Activated CD4-positive, alpha-beta memory T cell treated with anti-CD3 and anti-CD28 coated beads, Interleukin-2, amount 10 ng/mL, durations not matched to agents 7 days and 5 days (primary cell): ENCODE measurements at regions of chr5 and their contacts with region 1.

Region 1: GRCh38 chr5:163489055-163489744 is 16.2 kb upstream of the MAT2B start:
- DNase-seq: no peak
- H3K4me3 Mint-ChIP-seq: no peak overlapping the region
- H3K27ac Mint-ChIP-seq: no peak overlapping the region
- H3K4me1 Mint-ChIP-seq: no peaks in the 10 kb centered on the region
- H3K27me3 Mint-ChIP-seq: no peaks in the 10 kb centered on the region

Region 2: GRCh38 chr5:163505368-163506094 is 16.3 kb after region 1 on chr5 and contains the start of gene MAT2B:
- CTCF ChIA-PET with region 1: interaction called, 6 read pairs
- POLR2A ChIA-PET with region 1: interaction called, 10 read pairs
- DNase-seq: peak; percentile 96
- H3K4me3 Mint-ChIP-seq: peak within 1 kb of the TSS; percentile 96
- H3K27ac Mint-ChIP-seq: peak within 1 kb of the TSS; percentile 99
- H3K4me1 Mint-ChIP-seq: peaks cover 36% of the 10 kb centered on the region
- H3K27me3 Mint-ChIP-seq: no peaks in the 10 kb centered on the region
- total RNA-seq, gene MAT2B: 112 to 119 TPM

Region 3: GRCh38 chr5:163585206-163585605 is 96.0 kb after region 1 on chr5:
- CTCF ChIA-PET with region 1: no interaction called
- POLR2A ChIA-PET with region 1: no interaction called
- DNase-seq: no peak
- H3K4me3 Mint-ChIP-seq: no peak overlapping the region
- H3K27ac Mint-ChIP-seq: no peak overlapping the region
- H3K4me1 Mint-ChIP-seq: no peaks in the 10 kb centered on the region
- H3K27me3 Mint-ChIP-seq: peaks cover 2% of the 10 kb centered on the region